Activated naive CD8-positive, alpha-beta T cell treated with anti-CD3 and anti-CD28 coated beads, Interleukin-2, amount 10 ng/mL, durations not matched to agents 7 days and 5 days (primary cell): ENCODE measurements at regions of chr16 and their contacts with region 1.

Region 1: GRCh38 chr16:85821441-85822135 is 22.1 kb downstream of the COX4I1 start:
- DNase-seq: peak; percentile 90
- ATAC-seq: peak; percentile 87
- H3K4me3 Mint-ChIP-seq: no peak overlapping the region
- H3K27ac Mint-ChIP-seq: no peak overlapping the region
- H3K4me1 Mint-ChIP-seq: peaks cover 6% of the 10 kb centered on the region
- H3K27me3 Mint-ChIP-seq: peaks cover 22% of the 10 kb centered on the region

Region 2: DNA sequence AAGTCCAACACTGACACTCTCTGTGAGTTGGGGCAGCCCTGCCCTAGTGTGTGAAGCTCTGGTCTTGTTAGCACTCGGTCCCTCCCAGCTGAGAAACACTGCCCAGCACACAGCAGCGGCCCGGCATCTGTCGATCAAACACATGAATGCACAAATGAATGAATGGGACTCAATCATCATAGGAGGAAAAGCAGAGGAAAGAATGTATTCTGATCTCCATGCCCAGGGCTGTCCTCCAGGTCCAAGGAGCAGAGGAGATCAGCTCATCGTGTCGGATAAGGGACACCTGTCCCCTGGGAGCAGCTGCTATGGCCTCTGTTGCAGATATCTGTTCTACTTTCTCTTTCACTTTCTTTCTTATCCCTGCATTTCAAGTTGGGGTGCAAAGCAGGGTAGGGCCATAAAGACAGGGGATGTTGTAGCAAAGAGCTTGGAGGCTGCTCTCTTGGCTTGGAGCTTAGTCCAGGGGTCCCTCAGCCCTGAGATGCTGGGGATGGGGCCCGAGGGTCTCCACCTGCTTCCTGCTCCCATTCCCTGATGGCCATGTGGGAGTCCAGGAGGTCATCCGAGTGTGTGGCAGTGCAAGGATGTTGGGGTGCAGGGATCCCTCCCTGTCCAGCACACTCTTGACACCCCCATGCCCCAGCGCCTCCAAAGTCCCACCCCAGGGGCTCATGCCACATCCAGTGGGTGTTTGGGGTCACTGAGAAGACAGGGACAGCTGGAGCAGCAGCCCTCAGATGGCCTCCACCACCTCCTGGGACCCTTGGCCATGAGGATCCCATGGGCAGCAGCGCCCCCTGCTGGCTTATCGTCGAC is 165.6 kb after region 1 on chr16:
- POLR2A ChIA-PET with region 1: interaction called, 20 read pairs
- DNase-seq: peak; percentile 69
- ATAC-seq: peak; percentile 65
- H3K4me3 Mint-ChIP-seq: peak overlapping the region; percentile 41
- H3K27ac Mint-ChIP-seq: peak overlapping the region; percentile 68
- H3K4me1 Mint-ChIP-seq: peaks cover 37% of the 10 kb centered on the region
- H3K27me3 Mint-ChIP-seq: no peaks in the 10 kb centered on the region

Region 3: GRCh38 chr16:86016201-86016871 is 194.7 kb after region 1 on chr16:
- POLR2A ChIA-PET with region 1: interaction called, 12 read pairs
- DNase-seq: peak; percentile 42
- ATAC-seq: peak; percentile 58
- H3K4me3 Mint-ChIP-seq: no peak overlapping the region
- H3K27ac Mint-ChIP-seq: no peak overlapping the region
- H3K4me1 Mint-ChIP-seq: peaks cover 11% of the 10 kb centered on the region
- H3K27me3 Mint-ChIP-seq: peaks cover 35% of the 10 kb centered on the region